HCT116 (cell line): ENCODE measurements at regions of chr10 and their contacts with region 1.

Region 1: GRCh38 chr10:80855348-80855971 is 317.8 kb downstream of the SH2D4B start:
- DNase-seq: no peak
- ATAC-seq: peak; percentile 67
- H3K4me3 ChIP-seq: no peak overlapping the region
- H3K27ac ChIP-seq: no peak overlapping the region
- H3K4me1 ChIP-seq: no peaks in the 10 kb centered on the region
- H3K27me3 ChIP-seq: no peaks in the 10 kb centered on the region; the same call in 1 of the 2 replicates
- CTCF ChIP-seq: peak; percentile 17 to 55 (median 53); a peak in 5 of 6 replicates
- POLR2A ChIP-seq: no peak
- RAD21 ChIP-seq: no peak

Region 2: DNA sequence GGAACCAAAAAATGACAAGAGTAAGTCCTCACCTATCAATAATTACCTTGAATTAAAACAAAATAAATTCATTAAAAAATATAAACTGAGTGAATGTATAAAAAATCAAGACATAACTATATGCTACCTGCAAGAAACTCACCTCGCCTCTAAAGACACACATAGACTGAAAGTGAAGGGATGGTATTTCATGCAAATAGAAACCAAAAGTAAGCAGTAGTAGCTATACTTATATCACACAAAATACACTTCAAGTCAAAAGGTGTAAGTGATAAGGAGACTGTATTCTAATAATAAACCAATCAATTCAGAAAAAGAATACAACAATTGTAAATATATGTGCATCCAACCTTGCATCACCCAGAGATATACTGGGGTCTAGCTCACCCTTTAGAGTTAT is 14.8 kb after region 1 on chr10:
- CTCF ChIA-PET with region 1: no interaction called
- POLR2A ChIA-PET with region 1: no interaction called
- RAD21 ChIA-PET with region 1: no interaction called
- intact Hi-C with region 1: loop called (anchors 2 kb)
- DNase-seq: no peak
- ATAC-seq: no peak
- H3K4me3 ChIP-seq: no peak overlapping the region
- H3K27ac ChIP-seq: no peak overlapping the region
- H3K4me1 ChIP-seq: no peaks in the 10 kb centered on the region
- H3K27me3 ChIP-seq: no peaks in the 10 kb centered on the region
- CTCF ChIP-seq: no peak
- POLR2A ChIP-seq: no peak
- RAD21 ChIP-seq: no peak

Region 3: GRCh38 chr10:80952436-80952835 is 97.0 kb after region 1 on chr10:
- CTCF ChIA-PET with region 1: no interaction called
- POLR2A ChIA-PET with region 1: no interaction called
- RAD21 ChIA-PET with region 1: no interaction called
- intact Hi-C with region 1: no loop called
- DNase-seq: no peak
- ATAC-seq: no peak
- H3K4me3 ChIP-seq: no peak overlapping the region
- H3K27ac ChIP-seq: no peak overlapping the region
- H3K4me1 ChIP-seq: no peaks in the 10 kb centered on the region
- H3K27me3 ChIP-seq: no peaks in the 10 kb centered on the region
- CTCF ChIP-seq: no peak
- POLR2A ChIP-seq: no peak
- RAD21 ChIP-seq: no peak